ENCODE measurements at regions of chr10 and their contacts with region 1.

Region 1: DNA sequence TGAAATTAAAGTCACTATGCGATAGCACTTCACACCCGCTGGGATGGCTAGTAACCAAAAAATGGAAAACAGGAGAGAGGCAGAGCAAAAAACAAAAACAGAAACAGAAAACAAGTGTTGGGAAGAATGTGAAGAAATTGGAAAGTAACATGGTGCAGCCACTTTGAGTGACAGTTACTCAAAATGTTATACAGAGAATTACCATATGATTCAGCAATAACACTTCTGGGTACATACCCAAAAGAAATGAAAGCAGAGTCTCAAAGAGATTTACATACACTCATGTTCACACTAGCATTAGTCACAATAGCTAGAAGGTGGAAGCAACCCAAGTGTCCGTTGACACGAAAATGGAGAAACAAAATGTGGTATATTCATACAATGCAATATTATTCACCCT is 88.6 kb upstream of the KCNIP2 start:
- DNase-seq: no peak
- H3K4me3 Mint-ChIP-seq: no peak overlapping the region
- H3K27ac Mint-ChIP-seq: peak overlapping the region; percentile 36
- H3K4me1 Mint-ChIP-seq: peaks cover 6% of the 10 kb centered on the region
- H3K27me3 Mint-ChIP-seq: no peaks in the 10 kb centered on the region

Region 2: GRCh38 chr10:100725071-100725471 is 1207.1 kb before region 1 on chr10:
- intact Hi-C with region 1: no loop called
- DNase-seq: no peak
- H3K4me3 Mint-ChIP-seq: no peak overlapping the region
- H3K27ac Mint-ChIP-seq: no peak overlapping the region
- H3K4me1 Mint-ChIP-seq: peaks cover 11% of the 10 kb centered on the region
- H3K27me3 Mint-ChIP-seq: peaks cover 78% of the 10 kb centered on the region

Region 3: GRCh38 chr10:101830322-101831168 is 101.6 kb before region 1 on chr10:
- intact Hi-C with region 1: loop called (anchors 1 kb)
- DNase-seq: peak; percentile 97
- H3K4me3 Mint-ChIP-seq: peak overlapping the region; percentile 87
- H3K27ac Mint-ChIP-seq: peak overlapping the region; percentile 99
- H3K4me1 Mint-ChIP-seq: peaks cover 49% of the 10 kb centered on the region
- H3K27me3 Mint-ChIP-seq: peaks cover 3% of the 10 kb centered on the region

Region 4: GRCh38 chr10:101986625-101986973 is 54.4 kb after region 1 on chr10:
- intact Hi-C with region 1: no loop called
- DNase-seq: no peak
- H3K4me3 Mint-ChIP-seq: no peak overlapping the region
- H3K27ac Mint-ChIP-seq: no peak overlapping the region
- H3K4me1 Mint-ChIP-seq: peaks cover 4% of the 10 kb centered on the region
- H3K27me3 Mint-ChIP-seq: no peaks in the 10 kb centered on the region

Region 5: GRCh38 chr10:102085336-102085735 is 153.2 kb after region 1 on chr10:
- intact Hi-C with region 1: no loop called
- DNase-seq: no peak
- H3K4me3 Mint-ChIP-seq: no peak overlapping the region
- H3K27ac Mint-ChIP-seq: no peak overlapping the region
- H3K4me1 Mint-ChIP-seq: no peaks in the 10 kb centered on the region
- H3K27me3 Mint-ChIP-seq: no peaks in the 10 kb centered on the region

Region 6: DNA sequence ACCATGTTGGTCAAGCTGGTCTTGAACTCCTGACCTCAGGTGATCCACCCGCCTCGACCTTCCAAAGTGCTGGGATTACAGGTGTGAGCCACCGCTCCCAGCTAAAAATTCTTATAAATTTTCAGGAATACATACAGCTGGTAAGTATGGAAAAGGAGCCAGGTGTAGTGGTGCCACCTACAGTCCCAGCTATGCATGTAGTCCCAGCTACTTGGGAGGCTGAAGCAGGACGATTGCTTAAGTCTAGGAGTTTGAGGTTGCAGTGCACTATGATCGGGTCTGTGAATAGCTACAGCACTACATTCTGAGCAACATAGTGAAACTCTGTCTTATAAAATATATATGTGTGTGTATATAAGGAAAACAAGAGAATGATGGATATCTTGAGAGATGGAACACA is 169.0 kb after region 1 on chr10:
- intact Hi-C with region 1: no loop called
- DNase-seq: no peak
- H3K4me3 Mint-ChIP-seq: no peak overlapping the region
- H3K27ac Mint-ChIP-seq: no peak overlapping the region
- H3K4me1 Mint-ChIP-seq: peaks cover 12% of the 10 kb centered on the region
- H3K27me3 Mint-ChIP-seq: no peaks in the 10 kb centered on the region